ENCODE measurements at regions of chr19 and their contacts with region 1.

Region 1: DNA sequence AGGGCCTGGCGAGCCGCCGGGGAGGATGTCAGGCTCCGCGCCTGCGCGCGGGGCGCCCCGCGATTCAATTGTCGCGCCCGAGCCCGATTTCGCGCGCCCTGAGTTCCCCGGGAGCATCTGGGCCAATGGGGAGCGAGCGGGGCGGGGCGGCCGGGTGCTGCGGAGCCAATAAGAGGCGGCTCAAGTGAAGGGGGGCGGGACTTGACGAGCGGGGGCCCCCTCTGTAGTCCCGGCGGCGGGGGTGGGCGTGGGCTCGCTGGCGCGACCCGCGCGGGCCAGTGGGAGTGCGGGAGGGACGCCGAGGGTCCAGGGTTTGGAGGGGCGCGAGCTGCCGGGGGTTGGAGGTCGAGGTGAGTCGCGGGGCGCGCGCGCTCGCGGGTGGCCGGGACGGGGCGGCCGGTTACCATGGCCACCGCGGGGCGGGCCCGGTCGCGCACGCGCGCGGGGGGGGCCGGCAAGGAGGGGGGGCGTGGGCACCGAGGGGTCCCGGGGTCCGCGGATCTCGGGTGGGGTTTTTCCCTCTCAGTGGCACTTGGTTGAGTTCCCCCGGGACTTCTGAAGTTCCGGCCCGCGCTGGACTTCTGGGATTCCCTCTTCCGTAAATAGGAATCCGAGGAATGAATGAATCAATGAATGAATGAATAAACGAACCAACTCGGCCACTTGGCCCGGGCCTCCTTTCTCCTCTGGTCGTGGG is 744 bp downstream of the UHRF1 start:
- DNase-seq: peak; percentile 80 to 83 (median 83)
- H3K4me3 ChIP-seq: peak overlapping the region; percentile 46 to 79 (median 61)
- H3K4me3 Mint-ChIP-seq: peak overlapping the region; percentile 90 to 91
- H3K27ac ChIP-seq: peak overlapping the region; percentile 43 to 91
- H3K27ac Mint-ChIP-seq: peak overlapping the region; percentile 69 to 89 (median 84)
- H3K4me1 ChIP-seq: peaks cover 50 to 60% of the 10 kb centered on the region in 2 donors
- H3K4me1 Mint-ChIP-seq: peaks cover 56% of the 10 kb centered on the region
- H3K27me3 ChIP-seq: no peaks in the 10 kb centered on the region
- H3K27me3 Mint-ChIP-seq: peaks cover 0 to 6% (median 0%) of the 10 kb centered on the region in 3 donors
- CTCF ChIP-seq: no peak

Region 2: GRCh38 chr19:4723367-4724187 is 186.5 kb before region 1 on chr19 and contains the start of gene DPP9:
- intact Hi-C with region 1: loop called in 1 of 2 experiments (anchors 2 kb)
- DNase-seq: peak; percentile 100
- H3K4me3 ChIP-seq: peak within 1 kb of the TSS; percentile 84 to 93 (median 91)
- H3K4me3 Mint-ChIP-seq: peak within 1 kb of the TSS; percentile 94 to 95
- H3K27ac ChIP-seq: peak within 1 kb of the TSS; percentile 64 to 83
- H3K27ac Mint-ChIP-seq: peak within 1 kb of the TSS; percentile 87 to 98 (median 95)
- H3K4me1 ChIP-seq: peaks cover 22 to 31% of the 10 kb centered on the region in 2 donors
- H3K4me1 Mint-ChIP-seq: peaks cover 23% of the 10 kb centered on the region
- H3K27me3 ChIP-seq: no peaks in the 10 kb centered on the region
- H3K27me3 Mint-ChIP-seq: peaks cover 0 to 8% (median 3%) of the 10 kb centered on the region in 3 donors
- CTCF ChIP-seq: no peak
- polyA plus RNA-seq, gene DPP9: 12.6 to 23.8 (median 13.9) TPM

Region 3: DNA sequence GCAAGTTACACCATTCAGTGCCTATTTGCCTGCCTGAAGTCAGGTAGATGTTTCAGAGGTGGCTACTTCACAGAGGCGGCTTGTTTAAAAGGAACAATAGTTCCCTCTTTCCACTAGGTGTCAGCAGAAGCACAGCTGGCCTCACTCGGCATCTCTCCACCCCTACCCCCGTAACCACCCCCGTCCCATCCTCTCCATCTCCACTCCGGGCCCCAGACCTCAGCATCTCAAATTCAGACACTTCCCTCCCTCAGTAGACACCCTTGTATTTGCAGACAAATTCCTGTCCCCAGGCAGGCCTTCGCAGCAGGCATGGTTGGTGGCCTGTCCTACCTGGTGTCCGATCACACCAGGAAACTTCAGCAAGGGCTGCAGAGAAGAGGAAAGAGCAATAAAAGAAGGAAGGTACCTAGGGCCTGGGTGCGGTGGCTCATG is 177.3 kb before region 1 on chr19:
- intact Hi-C with region 1: loop called in 1 of 2 experiments (anchors 10 kb)
- DNase-seq: peak; percentile 43 to 65 (median 53)
- H3K4me3 ChIP-seq: peak overlapping the region in 1 of 3 experiments; percentile 28
- H3K4me3 Mint-ChIP-seq: peak overlapping the region in 1 of 2 donors; percentile 15
- H3K27ac ChIP-seq: no peak overlapping the region
- H3K27ac Mint-ChIP-seq: no peak overlapping the region
- H3K4me1 ChIP-seq: peaks cover 0 to 3% of the 10 kb centered on the region in 2 donors
- H3K4me1 Mint-ChIP-seq: peaks cover 12% of the 10 kb centered on the region
- H3K27me3 ChIP-seq: peaks cover 0 to 6% of the 10 kb centered on the region in 2 donors
- H3K27me3 Mint-ChIP-seq: peaks cover 7 to 18% (median 14%) of the 10 kb centered on the region in 3 donors
- CTCF ChIP-seq: peak; percentile 75

Region 4: DNA sequence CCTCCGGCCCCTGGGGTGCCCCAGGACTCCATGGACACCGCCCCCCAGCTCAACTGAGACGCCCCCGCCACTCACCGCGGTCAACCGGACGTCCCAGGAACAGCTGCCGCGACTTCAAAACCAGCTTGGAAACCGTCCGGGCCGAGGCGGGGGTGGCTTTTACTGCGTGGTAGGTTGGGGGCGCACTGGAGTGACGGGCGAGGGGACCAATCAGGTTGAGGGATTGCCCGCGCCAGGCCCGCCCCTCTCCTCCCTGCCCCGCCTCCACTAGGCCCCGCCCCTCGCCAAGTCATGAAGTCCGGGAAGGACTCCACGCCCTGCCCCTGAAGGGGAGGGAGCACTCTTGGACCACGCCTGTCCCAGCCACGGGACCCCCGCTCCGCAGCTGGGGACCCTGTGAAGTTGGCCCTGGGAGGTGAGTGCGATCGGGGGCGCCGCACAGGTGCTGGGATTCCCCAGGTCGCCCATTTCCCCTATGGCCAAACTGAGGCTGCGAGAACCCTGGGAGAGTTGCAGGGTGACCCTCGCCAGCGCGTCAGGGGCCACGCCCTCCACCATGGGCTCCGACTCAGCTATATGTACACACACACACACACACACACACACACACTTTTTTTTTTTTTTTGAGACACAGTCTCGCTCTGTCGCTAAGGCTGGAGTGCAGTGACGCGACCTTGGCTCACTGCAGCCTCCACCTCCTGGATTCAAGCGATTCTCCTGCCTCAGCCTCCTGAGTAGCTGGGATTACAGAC is 42.3 kb before region 1 on chr19 and contains the start of gene PLIN3:
- intact Hi-C with region 1: loop called (anchors 1 to 5 kb)
- DNase-seq: peak; percentile 89 to 96 (median 95)
- H3K4me3 ChIP-seq: peak within 1 kb of the TSS; percentile 67 to 100 (median 92)
- H3K4me3 Mint-ChIP-seq: peak within 1 kb of the TSS; percentile 92 to 94
- H3K27ac ChIP-seq: peak within 1 kb of the TSS; percentile 71 to 90
- H3K27ac Mint-ChIP-seq: peak within 1 kb of the TSS; percentile 86 to 96 (median 93)
- H3K4me1 ChIP-seq: peaks cover 48 to 51% of the 10 kb centered on the region in 2 donors
- H3K4me1 Mint-ChIP-seq: peaks cover 51% of the 10 kb centered on the region
- H3K27me3 ChIP-seq: no peaks in the 10 kb centered on the region
- H3K27me3 Mint-ChIP-seq: peaks cover 0 to 4% (median 0%) of the 10 kb centered on the region in 3 donors
- CTCF ChIP-seq: no peak
- polyA plus RNA-seq, gene PLIN3: 78.8 to 151 (median 138) TPM

Region 5: GRCh38 chr19:4889034-4889815 is 20.8 kb before region 1 on chr19:
- intact Hi-C with region 1: no loop called
- DNase-seq: no peak
- H3K4me3 ChIP-seq: no peak overlapping the region
- H3K4me3 Mint-ChIP-seq: no peak overlapping the region
- H3K27ac ChIP-seq: no peak overlapping the region
- H3K27ac Mint-ChIP-seq: peak overlapping the region in 1 of 7 donors; percentile 62
- H3K4me1 ChIP-seq: no peaks in the 10 kb centered on the region
- H3K4me1 Mint-ChIP-seq: peaks cover 6% of the 10 kb centered on the region
- H3K27me3 ChIP-seq: no peaks in the 10 kb centered on the region
- H3K27me3 Mint-ChIP-seq: peaks cover 0 to 9% (median 0%) of the 10 kb centered on the region in 3 donors
- CTCF ChIP-seq: no peak

Region 6: GRCh38 chr19:4933528-4933927 is 23.5 kb after region 1 on chr19:
- intact Hi-C with region 1: no loop called
- DNase-seq: no peak
- H3K4me3 ChIP-seq: no peak overlapping the region
- H3K4me3 Mint-ChIP-seq: no peak overlapping the region
- H3K27ac ChIP-seq: peak overlapping the region in 1 of 2 donors; percentile 53
- H3K27ac Mint-ChIP-seq: peak overlapping the region in 6 of 7 donors; percentile 31 to 73 (median 68)
- H3K4me1 ChIP-seq: no peaks in the 10 kb centered on the region
- H3K4me1 Mint-ChIP-seq: peaks cover 3% of the 10 kb centered on the region
- H3K27me3 ChIP-seq: no peaks in the 10 kb centered on the region
- H3K27me3 Mint-ChIP-seq: peaks cover 0 to 1% (median 0%) of the 10 kb centered on the region in 3 donors
- CTCF ChIP-seq: no peak

Region 7: DNA sequence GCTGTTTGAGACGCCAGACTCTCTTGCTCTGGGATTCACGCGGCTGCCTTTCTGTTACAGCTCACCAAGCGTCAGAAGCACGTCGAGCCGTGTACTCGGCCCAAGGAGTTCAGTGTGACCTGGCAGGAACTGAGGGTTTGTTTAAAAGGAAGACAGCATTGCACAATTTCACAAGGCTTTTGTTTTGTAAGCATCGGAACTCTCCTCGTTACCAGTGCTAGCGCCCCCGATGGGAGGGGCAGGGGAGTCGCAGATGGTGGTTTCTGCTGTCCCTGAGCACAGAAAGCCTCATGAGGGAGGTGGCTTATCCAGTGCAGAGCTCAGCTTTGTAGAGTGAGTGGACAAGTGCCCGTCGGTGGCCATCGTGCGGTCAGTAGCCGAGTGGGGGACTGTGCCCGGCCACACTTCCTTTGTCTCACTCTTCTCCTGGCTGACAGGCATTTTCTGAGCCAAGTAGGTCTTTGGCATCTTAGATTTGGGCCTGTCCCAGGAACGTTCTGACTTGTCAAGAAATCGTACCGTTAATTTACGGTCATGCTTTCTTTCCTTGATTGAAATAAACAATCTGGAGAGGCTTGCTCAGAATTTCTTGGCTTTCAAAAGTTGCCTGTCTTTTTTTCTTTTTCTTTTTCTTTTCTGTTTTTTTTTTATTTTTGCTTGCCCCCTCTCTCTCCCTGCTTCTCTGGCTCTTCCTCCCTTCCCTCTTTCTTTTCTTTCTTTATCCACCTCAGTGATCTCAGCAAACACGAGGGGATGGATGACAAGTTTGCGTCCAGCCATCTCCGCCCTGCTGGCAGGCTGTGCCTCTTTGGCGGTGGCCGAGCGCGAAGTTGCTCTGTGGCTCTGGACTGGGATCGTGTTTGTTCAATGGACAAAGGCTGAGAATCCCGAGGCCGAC is 66.6 kb after region 1 on chr19:
- intact Hi-C with region 1: loop called (anchors 5 to 10 kb)
- DNase-seq: peak; percentile 95 to 98 (median 96)
- H3K4me3 ChIP-seq: peak overlapping the region in 1 of 3 experiments; percentile 56
- H3K4me3 Mint-ChIP-seq: peak overlapping the region; percentile 59 to 69
- H3K27ac ChIP-seq: peak overlapping the region; percentile 84 to 96
- H3K27ac Mint-ChIP-seq: peak overlapping the region; percentile 98 to 99 (median 99)
- H3K4me1 ChIP-seq: peaks cover 63 to 72% of the 10 kb centered on the region in 2 donors
- H3K4me1 Mint-ChIP-seq: peaks cover 70% of the 10 kb centered on the region
- H3K27me3 ChIP-seq: no peaks in the 10 kb centered on the region
- H3K27me3 Mint-ChIP-seq: peaks cover 0 to 3% (median 0%) of the 10 kb centered on the region in 3 donors
- CTCF ChIP-seq: peak; percentile 68